ENCODE measurements at regions of chr2 and their contacts with region 1.

Region 1: GRCh38 chr2:119028327-119029174 is 86.6 kb downstream of the MARCO start:
- DNase-seq: peak; percentile 48 to 58 (median 55)
- ATAC-seq: peak; percentile 84
- H3K4me3 ChIP-seq: no peak overlapping the region
- H3K27ac ChIP-seq: no peak overlapping the region
- H3K4me1 ChIP-seq: no peaks in the 10 kb centered on the region
- H3K27me3 ChIP-seq: peaks cover 0 to 28% of the 10 kb centered on the region in 2 experiments; a peak in 3 of 5 replicates
- CTCF ChIP-seq: peak; percentile 66 to 73 (median 67)
- EP300 ChIP-seq: no peak
- POLR2A ChIP-seq: no peak
- RAD21 ChIP-seq: peak; percentile 40 to 68

Region 2: DNA sequence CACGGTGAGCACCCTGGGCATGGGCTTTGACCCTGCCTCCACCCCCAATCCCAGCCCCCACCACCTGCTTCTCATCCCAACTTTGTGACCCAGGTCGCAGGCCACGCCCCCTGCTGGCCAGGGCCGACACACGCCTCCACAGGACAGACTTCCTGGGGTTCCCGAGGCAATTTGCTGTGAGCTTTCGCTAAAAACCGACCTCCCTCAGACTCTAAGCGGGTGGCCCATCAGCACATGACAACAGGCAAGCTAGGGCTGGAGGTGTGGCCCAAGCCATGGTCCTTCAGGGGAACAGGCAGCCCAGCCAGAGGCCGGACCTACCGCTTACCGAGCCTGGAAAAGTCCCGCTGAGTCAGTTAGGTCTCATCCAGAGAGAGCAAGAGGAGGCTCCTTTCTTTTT is 98.1 kb after region 1 on chr2:
- CTCF ChIA-PET with region 1: interaction called, 3 read pairs
- POLR2A ChIA-PET with region 1: no interaction called
- in situ Hi-C with region 1: no loop called
- intact Hi-C with region 1: loop called (anchors 2 kb)
- DNase-seq: peak; percentile 76 to 88 (median 84)
- ATAC-seq: peak; percentile 95
- H3K4me3 ChIP-seq: no peak overlapping the region
- H3K27ac ChIP-seq: no peak overlapping the region
- H3K4me1 ChIP-seq: peaks cover 0 to 4% of the 10 kb centered on the region in 2 experiments; a peak in 2 of 5 replicates
- H3K27me3 ChIP-seq: peaks cover 12 to 52% of the 10 kb centered on the region in 2 experiments
- CTCF ChIP-seq: peak; percentile 69 to 80 (median 78)
- EP300 ChIP-seq: no peak
- POLR2A ChIP-seq: no peak
- RAD21 ChIP-seq: peak; percentile 18 to 47; a peak in 2 of 4 replicates

Region 3: GRCh38 chr2:119174216-119175037 is 145.9 kb after region 1 on chr2:
- CTCF ChIA-PET with region 1: no interaction called
- POLR2A ChIA-PET with region 1: no interaction called
- in situ Hi-C with region 1: no loop called
- intact Hi-C with region 1: loop called (anchors 1 kb)
- DNase-seq: peak; percentile 64 to 79 (median 73)
- ATAC-seq: peak; percentile 95
- H3K4me3 ChIP-seq: no peak overlapping the region
- H3K27ac ChIP-seq: no peak overlapping the region
- H3K4me1 ChIP-seq: peaks cover 3 to 17% of the 10 kb centered on the region in 2 experiments; a peak in 3 of 5 replicates
- H3K27me3 ChIP-seq: peaks cover 0 to 23% of the 10 kb centered on the region in 2 experiments; a peak in 2 of 5 replicates
- CTCF ChIP-seq: peak; percentile 81 to 90 (median 86)
- EP300 ChIP-seq: no peak
- POLR2A ChIP-seq: no peak
- RAD21 ChIP-seq: peak; percentile 40 to 61

Region 4: DNA sequence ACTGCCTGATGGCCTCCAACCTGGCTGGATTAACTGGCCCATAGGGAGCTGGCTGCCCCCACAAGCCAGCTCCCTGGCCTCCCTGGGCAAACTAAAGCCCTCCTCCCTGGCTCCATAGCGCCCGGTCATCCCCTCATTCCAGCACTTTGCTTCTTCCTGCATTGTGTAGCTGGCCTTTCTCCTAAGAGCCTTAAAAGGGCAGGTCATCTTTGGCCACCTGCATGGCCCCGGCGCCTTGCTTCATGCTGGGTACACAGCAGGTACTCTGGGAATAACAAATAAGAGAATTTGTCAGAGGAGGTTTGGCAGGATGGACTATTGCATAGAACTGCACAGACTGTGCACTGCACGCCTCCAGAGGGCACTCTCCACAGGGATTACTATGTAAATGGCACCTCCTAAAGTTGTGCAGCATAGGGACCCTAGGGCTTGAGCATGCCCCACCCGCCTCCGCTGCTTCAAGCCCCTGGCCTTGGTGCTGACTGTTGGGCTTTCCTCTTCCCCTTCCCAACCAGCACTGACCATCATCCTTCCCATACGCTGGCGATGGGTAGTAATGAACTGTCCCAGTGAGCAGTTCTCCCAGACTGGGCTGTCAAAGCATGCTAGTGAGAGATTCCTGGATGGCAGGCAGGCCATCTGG is 205.9 kb after region 1 on chr2:
- CTCF ChIA-PET with region 1: no interaction called
- POLR2A ChIA-PET with region 1: no interaction called
- in situ Hi-C with region 1: no loop called
- intact Hi-C with region 1: no loop called
- DNase-seq: peak; percentile 34 to 45 (median 38)
- ATAC-seq: peak; percentile 93
- H3K4me3 ChIP-seq: no peak overlapping the region
- H3K27ac ChIP-seq: no peak overlapping the region
- H3K4me1 ChIP-seq: peaks cover 0 to 6% of the 10 kb centered on the region in 2 experiments; a peak in 2 of 5 replicates
- H3K27me3 ChIP-seq: no peaks in the 10 kb centered on the region
- CTCF ChIP-seq: peak; percentile 52 to 61 (median 61)
- EP300 ChIP-seq: no peak
- POLR2A ChIP-seq: no peak
- RAD21 ChIP-seq: peak; percentile 26 to 56; a peak in 2 of 4 replicates

Region 5: DNA sequence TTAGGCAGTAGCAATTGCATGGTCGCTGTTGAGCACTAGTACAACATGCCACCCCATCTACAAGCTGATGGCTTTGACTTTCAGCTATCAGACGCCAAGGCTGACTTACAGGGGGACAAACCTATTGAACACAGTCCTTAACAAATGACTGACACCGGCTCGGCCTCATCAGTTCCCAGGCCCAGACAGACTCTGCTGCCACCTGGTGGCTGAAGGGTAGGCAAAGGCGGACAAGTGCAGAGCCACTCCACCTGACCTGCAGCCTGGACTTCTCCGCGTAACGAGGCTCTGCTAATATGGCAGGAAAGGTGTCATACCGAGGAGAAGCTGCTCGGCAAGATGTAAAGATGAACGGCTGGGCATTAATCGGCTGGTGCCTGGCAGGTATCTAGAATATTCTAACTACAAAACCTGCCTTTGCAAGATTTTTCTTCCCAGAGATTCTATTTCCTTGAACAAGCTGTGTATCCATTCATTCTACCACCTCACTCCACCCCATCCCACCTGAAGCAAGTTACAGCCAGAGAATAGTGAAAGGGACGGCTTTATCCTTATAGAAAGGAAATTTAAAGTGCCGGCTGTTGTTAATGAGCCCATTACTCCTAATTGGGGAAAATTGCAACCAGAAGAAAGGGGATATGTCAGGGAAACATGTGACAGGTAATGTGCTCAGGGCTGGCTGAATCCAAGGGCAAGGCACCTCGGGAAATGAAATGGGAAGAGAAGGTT is 262.5 kb after region 1 on chr2:
- CTCF ChIA-PET with region 1: no interaction called
- POLR2A ChIA-PET with region 1: no interaction called
- in situ Hi-C with region 1: loop called (anchors 25 kb)
- intact Hi-C with region 1: loop called (anchors 5 kb)
- DNase-seq: peak; percentile 62 to 74 (median 67)
- ATAC-seq: peak; percentile 97
- H3K4me3 ChIP-seq: no peak overlapping the region
- H3K27ac ChIP-seq: no peak overlapping the region
- H3K4me1 ChIP-seq: no peaks in the 10 kb centered on the region; a peak in 1 of 5 replicates
- H3K27me3 ChIP-seq: peaks cover 32 to 58% of the 10 kb centered on the region in 2 experiments
- CTCF ChIP-seq: peak; percentile 79 to 83 (median 82)
- EP300 ChIP-seq: no peak
- POLR2A ChIP-seq: no peak
- RAD21 ChIP-seq: peak; percentile 65 to 89

Region 6: GRCh38 chr2:119476301-119477021 is 447.9 kb after region 1 on chr2:
- CTCF ChIA-PET with region 1: no interaction called
- POLR2A ChIA-PET with region 1: interaction called, 3 read pairs
- in situ Hi-C with region 1: no loop called
- intact Hi-C with region 1: loop called (anchors 10 kb)
- DNase-seq: peak; percentile 72 to 87 (median 82)
- ATAC-seq: peak; percentile 96
- H3K4me3 ChIP-seq: no peak overlapping the region
- H3K27ac ChIP-seq: no peak overlapping the region
- H3K4me1 ChIP-seq: peaks cover 4 to 5% of the 10 kb centered on the region in 2 experiments; a peak in 3 of 5 replicates
- H3K27me3 ChIP-seq: peaks cover 6 to 62% of the 10 kb centered on the region in 2 experiments; a peak in 4 of 5 replicates
- CTCF ChIP-seq: peak; percentile 90 to 94 (median 93)
- EP300 ChIP-seq: no peak
- POLR2A ChIP-seq: no peak
- RAD21 ChIP-seq: peak; percentile 96